ENCODE measurements at regions of chr12 and their contacts with region 1.

Region 1: DNA sequence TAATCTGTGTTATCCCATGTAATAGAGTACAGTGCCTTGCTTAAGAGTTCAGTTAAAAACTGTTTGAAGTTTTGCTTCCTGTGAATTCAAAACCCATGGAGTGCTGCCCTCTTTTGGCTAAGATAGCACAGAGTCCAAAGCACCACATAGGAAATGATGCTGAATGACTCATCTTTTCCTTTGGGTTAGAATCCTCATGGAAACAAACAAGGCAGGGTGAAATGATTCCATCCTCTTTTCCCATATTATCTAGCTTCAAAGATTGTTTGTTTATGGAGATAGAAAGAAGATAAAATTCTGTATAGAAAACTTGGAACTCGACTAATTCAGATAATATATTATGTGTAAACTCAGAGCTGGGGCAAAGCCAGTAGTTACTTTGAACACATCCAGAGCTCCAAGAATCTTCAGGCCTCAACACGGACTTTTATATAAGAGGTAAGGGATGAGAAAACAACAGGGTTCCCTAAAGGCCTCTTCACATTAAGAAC is 87.4 kb downstream of the OTOGL start:
- DNase-seq: peak; percentile 63 to 67
- H3K4me3 ChIP-seq: no peak overlapping the region
- H3K4me3 Mint-ChIP-seq: no peak overlapping the region
- H3K27ac Mint-ChIP-seq: no peak overlapping the region
- H3K4me1 ChIP-seq: no peaks in the 10 kb centered on the region
- H3K4me1 Mint-ChIP-seq: no peaks in the 10 kb centered on the region
- H3K27me3 ChIP-seq: no peaks in the 10 kb centered on the region
- H3K27me3 Mint-ChIP-seq: no peaks in the 10 kb centered on the region
- CTCF ChIP-seq: peak; percentile 62 to 83

Region 2: DNA sequence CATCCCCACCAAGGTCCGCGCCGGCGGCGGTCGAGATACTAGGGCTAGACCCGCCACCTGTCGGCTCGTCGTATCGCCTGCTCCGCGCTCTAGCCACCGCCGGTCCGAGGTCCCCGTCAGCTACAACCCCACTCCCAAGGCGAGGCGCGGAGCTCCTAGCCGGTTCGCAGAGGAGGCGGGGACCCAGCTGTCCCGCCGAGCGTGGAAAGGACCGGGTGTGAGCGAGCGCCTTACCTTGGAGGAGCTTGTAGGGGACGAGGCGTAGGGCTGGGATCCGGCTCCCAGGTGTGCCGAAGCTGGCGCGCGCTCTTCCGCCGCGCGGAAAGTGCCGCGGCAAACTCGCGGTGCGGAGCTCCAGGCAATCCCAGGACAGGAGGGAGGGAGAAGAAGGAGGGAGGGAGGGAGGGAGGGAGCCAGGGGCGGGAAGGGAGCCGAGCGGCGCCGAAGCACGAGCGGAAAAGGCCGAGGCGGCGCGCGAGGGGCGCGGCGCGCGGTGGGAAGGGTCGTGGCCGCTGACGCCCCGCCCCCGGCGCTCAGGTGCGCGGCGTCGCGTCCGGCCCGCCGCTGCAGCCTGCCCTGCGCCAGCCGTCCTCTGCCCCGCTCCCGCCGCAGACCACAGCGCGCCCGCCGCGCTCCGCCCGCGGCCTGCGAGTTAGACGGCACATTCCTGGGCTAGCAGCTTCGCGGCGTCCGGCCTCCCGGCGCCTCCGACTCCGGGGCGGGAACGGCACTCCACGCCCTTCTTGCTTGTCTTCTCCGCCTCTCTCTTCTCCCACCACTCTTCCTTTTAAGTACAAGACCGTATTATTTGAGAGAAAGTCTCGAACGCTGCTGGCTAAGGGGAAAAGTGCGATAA is 495.9 kb before region 1 on chr12 and contains the start of gene PAWR:
- CTCF ChIA-PET with region 1: no interaction called
- POLR2A ChIA-PET with region 1: no interaction called
- intact Hi-C with region 1: loop called (anchors 5 kb)
- DNase-seq: peak; percentile 89 to 92
- H3K4me3 ChIP-seq: peak within 1 kb of the TSS; percentile 98
- H3K4me3 Mint-ChIP-seq: peak within 1 kb of the TSS; percentile 89
- H3K27ac Mint-ChIP-seq: peak within 1 kb of the TSS; percentile 90
- H3K4me1 ChIP-seq: peaks cover 19% of the 10 kb centered on the region
- H3K4me1 Mint-ChIP-seq: peaks cover 23% of the 10 kb centered on the region
- H3K27me3 ChIP-seq: no peaks in the 10 kb centered on the region
- H3K27me3 Mint-ChIP-seq: no peaks in the 10 kb centered on the region
- CTCF ChIP-seq: no peak
- total RNA-seq, gene PAWR: 157 and 163 TPM in 2 replicates

Region 3: GRCh38 chr12:79886917-79887519 is 299.8 kb before region 1 on chr12:
- CTCF ChIA-PET with region 1: no interaction called
- POLR2A ChIA-PET with region 1: no interaction called
- intact Hi-C with region 1: loop called (anchors 1 kb)
- DNase-seq: peak in 1 of 2 experiments; percentile 44
- H3K4me3 ChIP-seq: no peak overlapping the region
- H3K4me3 Mint-ChIP-seq: no peak overlapping the region
- H3K27ac Mint-ChIP-seq: no peak overlapping the region
- H3K4me1 ChIP-seq: no peaks in the 10 kb centered on the region
- H3K4me1 Mint-ChIP-seq: peaks cover 8% of the 10 kb centered on the region
- H3K27me3 ChIP-seq: no peaks in the 10 kb centered on the region
- H3K27me3 Mint-ChIP-seq: no peaks in the 10 kb centered on the region
- CTCF ChIP-seq: peak; percentile 46 to 63

Region 4: DNA sequence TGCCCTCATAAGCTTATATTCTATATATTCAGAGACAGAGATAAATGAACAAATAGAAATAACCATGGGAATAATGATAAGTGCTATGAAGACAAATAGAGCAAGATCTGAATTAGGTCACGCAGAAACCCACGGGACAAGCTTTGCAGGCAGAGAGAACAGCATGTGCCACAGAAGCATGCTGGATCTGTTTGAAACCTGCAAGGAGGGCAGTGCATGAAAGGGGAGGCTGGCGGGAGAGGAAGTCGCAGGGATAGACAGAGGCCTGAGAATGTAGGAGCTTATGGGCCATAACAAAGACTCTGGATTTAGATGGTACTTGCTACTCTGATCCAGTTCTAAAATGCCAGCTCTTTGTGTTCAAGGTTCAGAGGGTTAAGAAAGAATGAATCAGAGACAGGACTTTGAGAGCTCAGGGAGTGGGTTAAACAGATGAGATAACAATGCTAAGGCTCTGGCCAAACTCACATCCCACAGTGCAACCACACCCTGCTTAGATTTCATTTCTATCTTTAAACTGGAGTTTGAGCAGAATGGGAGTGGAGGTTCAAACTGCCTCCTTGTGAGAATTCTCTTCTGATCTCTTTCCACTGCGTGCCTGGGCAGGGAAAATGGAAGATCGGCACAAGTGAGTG is 202.7 kb before region 1 on chr12:
- CTCF ChIA-PET with region 1: no interaction called
- POLR2A ChIA-PET with region 1: no interaction called
- intact Hi-C with region 1: loop called (anchors 10 kb)
- DNase-seq: no peak
- H3K4me3 ChIP-seq: no peak overlapping the region
- H3K4me3 Mint-ChIP-seq: no peak overlapping the region
- H3K27ac Mint-ChIP-seq: no peak overlapping the region
- H3K4me1 ChIP-seq: 0 out of 2 replicates have a peak, but pooled peaks cover 5% of the 10 kb centered on the region
- H3K4me1 Mint-ChIP-seq: peaks cover 27% of the 10 kb centered on the region
- H3K27me3 ChIP-seq: no peaks in the 10 kb centered on the region
- H3K27me3 Mint-ChIP-seq: no peaks in the 10 kb centered on the region
- CTCF ChIP-seq: no peak

Region 5: DNA sequence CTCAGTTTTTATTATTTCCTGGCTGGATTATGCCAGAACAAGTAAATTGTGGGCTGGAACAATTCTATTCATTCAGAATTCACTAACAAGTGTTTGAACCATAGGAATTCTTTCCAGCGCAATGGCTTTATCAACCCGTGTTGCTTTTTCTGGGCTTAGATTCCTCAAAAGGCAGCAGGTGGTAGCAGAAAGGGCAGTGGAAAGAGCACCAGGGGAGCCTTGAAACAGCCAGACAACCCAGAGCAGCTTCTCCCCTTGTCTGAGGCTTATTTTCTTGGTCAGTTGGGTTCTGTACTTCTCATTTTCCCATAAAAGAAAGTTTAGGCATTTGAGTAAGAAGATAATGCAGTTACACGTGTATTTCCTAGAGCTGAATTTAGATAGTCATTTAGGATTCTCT is 43.3 kb after region 1 on chr12:
- CTCF ChIA-PET with region 1: no interaction called
- POLR2A ChIA-PET with region 1: no interaction called
- intact Hi-C with region 1: no loop called
- DNase-seq: no peak
- H3K4me3 ChIP-seq: no peak overlapping the region
- H3K4me3 Mint-ChIP-seq: no peak overlapping the region
- H3K27ac Mint-ChIP-seq: no peak overlapping the region
- H3K4me1 ChIP-seq: no peaks in the 10 kb centered on the region
- H3K4me1 Mint-ChIP-seq: no peaks in the 10 kb centered on the region
- H3K27me3 ChIP-seq: no peaks in the 10 kb centered on the region
- H3K27me3 Mint-ChIP-seq: no peaks in the 10 kb centered on the region
- CTCF ChIP-seq: no peak

Measured in Caco-2 (cell line).